Right lobe of liver (tissue), 6 donors: ENCODE measurements at regions of chr3 and their contacts with region 1.

Region 1: GRCh38 chr3:160003520-160004128 is 15.0 kb downstream of the IL12A start:
- DNase-seq: peak in 2 of 3 donors; percentile 51 to 60
- ATAC-seq: peak; percentile 78 to 83 (median 80)
- H3K4me3 ChIP-seq: no peak overlapping the region
- H3K27ac ChIP-seq: no peak overlapping the region
- H3K4me1 ChIP-seq: no peaks in the 10 kb centered on the region
- H3K27me3 ChIP-seq: no peaks in the 10 kb centered on the region
- CTCF ChIP-seq: peak; percentile 46 to 55 (median 50)
- POLR2A ChIP-seq: no peak

Region 2: DNA sequence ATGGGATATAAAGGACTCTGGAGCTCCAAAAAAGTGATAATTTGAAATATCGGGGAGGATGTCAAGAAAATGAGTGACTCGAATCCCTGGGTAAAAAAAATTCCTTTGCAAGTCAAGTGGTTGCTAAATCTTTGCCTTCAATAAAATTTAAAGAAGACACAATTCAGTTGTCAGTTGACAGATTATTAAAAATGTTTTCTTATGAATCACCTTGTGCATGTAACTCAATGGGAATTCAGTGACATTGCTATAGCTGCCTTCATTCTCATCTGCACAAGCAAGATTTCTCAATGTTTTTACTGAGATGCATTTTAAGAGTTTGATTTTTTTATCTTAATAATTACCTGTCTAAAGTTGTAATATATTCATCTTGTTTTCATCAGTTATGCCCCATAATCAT is 279.0 kb before region 1 on chr3:
- intact Hi-C with region 1: no loop called
- DNase-seq: no peak
- ATAC-seq: no peak
- H3K4me3 ChIP-seq: no peak overlapping the region
- H3K27ac ChIP-seq: no peak overlapping the region
- H3K4me1 ChIP-seq: no peaks in the 10 kb centered on the region
- H3K27me3 ChIP-seq: no peaks in the 10 kb centered on the region
- CTCF ChIP-seq: no peak
- POLR2A ChIP-seq: no peak

Region 3: GRCh38 chr3:159884661-159885402 is 118.8 kb before region 1 on chr3:
- intact Hi-C with region 1: loop called (anchors 5 to 10 kb)
- DNase-seq: no peak
- ATAC-seq: peak; percentile 66 to 81 (median 74)
- H3K4me3 ChIP-seq: no peak overlapping the region
- H3K27ac ChIP-seq: no peak overlapping the region
- H3K4me1 ChIP-seq: no peaks in the 10 kb centered on the region
- H3K27me3 ChIP-seq: no peaks in the 10 kb centered on the region
- CTCF ChIP-seq: peak; percentile 51 to 59 (median 58)
- POLR2A ChIP-seq: no peak